Transverse colon (tissue), 4 donors: ENCODE measurements at regions of chr13 and their contacts with region 1.

Region 1: DNA sequence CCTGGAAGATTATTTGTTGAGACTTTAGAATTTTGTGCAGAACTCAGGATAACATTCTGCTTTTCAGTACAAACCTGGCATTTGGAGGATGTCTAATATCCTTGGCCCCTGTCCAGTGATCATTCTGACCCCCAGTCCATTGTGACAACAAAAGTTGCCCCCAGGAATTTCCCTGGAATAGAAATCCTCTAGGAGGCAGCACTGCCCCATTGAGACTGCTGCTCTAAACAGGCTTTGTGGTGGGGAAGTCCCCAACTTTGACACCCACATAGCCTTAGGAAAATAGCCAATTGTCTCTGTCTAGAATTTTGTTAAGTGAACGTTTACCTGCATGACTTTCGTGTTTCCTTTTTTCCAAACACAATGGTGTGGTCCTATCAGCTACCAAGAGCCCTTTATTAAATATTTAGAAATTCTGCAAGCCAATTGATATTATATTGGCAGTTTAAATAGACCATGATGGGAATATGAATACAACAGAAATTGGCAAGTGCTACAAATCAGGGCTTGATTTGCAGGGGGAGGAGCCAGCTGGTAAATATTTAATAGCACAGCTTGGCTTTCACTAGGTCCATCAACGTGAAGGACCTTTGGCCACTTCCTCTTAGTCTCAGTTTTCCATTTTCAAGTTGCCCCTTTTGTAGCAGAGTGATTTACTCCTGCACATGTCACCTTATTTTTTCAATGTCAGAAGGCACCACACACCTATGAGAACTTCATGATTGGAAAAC is 451.7 kb downstream of the EFNB2 start:
- DNase-seq: peak; percentile 43
- H3K4me3 ChIP-seq: no peak overlapping the region
- H3K27ac ChIP-seq: peak overlapping the region; percentile 3 to 61 (median 45)
- H3K4me1 ChIP-seq: peaks cover 0 to 28% (median 6%) of the 10 kb centered on the region in 4 donors
- H3K27me3 ChIP-seq: no peaks in the 10 kb centered on the region
- CTCF ChIP-seq: peak; percentile 44 to 76 (median 58)
- EP300 ChIP-seq: no peak
- POLR2A ChIP-seq: no peak

Region 2: DNA sequence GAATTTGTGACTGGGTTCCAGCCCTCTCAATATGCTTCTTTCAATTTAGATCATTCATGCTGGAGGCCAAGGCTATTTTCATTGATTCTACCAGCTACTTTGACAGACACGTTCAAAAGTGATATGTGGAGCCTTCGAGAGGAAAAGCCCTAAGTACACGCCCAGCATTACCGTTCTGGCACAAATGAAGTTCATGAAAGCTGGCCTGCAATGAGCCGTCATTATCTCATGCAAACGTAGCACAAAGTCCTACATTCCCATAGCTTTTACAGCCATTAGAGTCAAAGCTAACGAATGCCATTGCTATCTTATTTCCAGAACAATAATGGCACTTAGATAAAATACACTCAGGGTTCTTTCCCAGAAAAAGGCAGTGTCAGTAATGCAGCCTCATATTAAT is 785.9 kb before region 1 on chr13:
- in situ Hi-C with region 1: no loop called
- intact Hi-C with region 1: no loop called
- DNase-seq: no peak
- H3K4me3 ChIP-seq: no peak overlapping the region
- H3K27ac ChIP-seq: no peak overlapping the region
- H3K4me1 ChIP-seq: no peaks in the 10 kb centered on the region
- H3K27me3 ChIP-seq: no peaks in the 10 kb centered on the region
- CTCF ChIP-seq: no peak
- EP300 ChIP-seq: no peak
- POLR2A ChIP-seq: no peak

Region 3: GRCh38 chr13:105740739-105741138 is 343.0 kb before region 1 on chr13:
- in situ Hi-C with region 1: no loop called
- intact Hi-C with region 1: no loop called
- DNase-seq: no peak
- H3K4me3 ChIP-seq: no peak overlapping the region
- H3K27ac ChIP-seq: no peak overlapping the region
- H3K4me1 ChIP-seq: no peaks in the 10 kb centered on the region
- H3K27me3 ChIP-seq: no peaks in the 10 kb centered on the region
- CTCF ChIP-seq: no peak
- EP300 ChIP-seq: no peak
- POLR2A ChIP-seq: no peak

Region 4: DNA sequence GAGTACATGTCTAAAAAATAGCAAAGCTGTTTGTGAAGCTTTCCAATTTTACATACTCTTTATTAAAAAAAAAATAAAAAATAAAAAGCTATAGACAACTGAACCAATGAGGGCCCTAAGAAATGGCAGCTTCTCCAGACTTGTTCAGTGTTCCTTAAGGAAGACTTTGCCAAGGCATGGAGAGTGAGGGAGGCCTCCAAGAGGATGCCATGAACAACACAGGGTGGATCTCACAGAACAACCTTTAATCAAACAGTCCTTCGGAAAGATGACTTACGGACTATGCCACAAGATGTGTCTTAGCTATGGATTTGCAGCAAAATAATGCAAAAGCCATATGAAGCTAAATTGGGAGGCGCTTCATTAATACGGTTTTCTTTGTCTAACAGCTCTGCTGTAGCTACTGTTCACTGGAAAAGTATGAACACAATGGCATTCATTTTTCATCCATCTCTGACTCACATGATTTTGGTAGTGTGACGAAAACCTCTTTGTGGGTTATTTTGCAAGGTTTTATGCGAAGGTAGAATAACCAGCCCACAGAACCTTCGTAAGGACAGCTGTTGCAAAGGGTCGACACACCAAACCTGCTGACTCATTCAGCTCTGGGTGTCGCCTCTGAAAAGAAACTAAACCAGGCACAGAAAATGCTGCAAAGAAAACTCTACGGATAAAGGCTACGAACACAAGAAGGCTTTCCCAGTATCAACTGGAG is 423.9 kb after region 1 on chr13:
- in situ Hi-C with region 1: loop called in 2 of 4 experiments (anchors 25 kb)
- intact Hi-C with region 1: no loop called
- DNase-seq: no peak
- H3K4me3 ChIP-seq: no peak overlapping the region
- H3K27ac ChIP-seq: peak overlapping the region in 1 of 4 donors; percentile 8
- H3K4me1 ChIP-seq: peaks cover 0 to 4% (median 0%) of the 10 kb centered on the region in 4 donors
- H3K27me3 ChIP-seq: no peaks in the 10 kb centered on the region
- CTCF ChIP-seq: no peak
- EP300 ChIP-seq: no peak
- POLR2A ChIP-seq: no peak

Region 5: DNA sequence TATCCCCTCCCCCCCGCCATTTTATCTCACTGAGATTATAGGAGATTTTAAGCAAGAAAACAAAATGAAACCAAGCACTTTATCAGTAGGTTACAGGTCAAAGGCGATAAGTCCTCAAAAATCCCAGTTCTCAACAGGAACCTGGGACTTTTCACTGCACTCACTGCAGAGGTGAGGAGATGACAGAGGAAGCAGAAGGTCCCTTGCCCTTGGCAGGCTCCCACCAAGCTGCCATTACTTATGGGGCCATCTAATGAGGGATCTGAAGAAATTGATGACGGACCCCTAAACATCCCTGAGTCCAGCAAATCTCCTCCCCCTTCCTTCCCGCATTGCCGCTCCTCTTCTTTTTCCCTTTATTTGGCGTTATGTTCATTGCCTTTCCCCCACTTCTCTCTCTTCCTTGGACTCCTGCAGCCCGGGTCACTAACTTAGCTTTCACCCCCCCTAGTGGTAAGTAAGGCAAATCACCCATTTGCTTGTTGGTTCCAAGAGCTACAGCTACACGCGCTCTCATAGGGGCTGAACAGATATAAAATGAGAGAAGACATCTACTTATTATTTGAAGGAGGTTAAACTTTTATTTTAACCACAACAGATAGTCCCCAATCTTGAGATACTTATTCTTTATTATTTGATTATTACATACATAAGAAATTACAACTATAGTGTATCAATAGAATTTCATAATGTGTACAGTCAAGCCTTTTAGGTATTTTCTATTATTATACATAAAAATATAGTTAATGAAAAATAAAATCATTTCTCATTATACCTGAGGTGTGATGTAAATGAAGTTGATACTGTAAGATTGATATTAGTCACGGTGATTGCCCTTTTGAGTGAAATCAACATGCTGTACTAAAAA is 536.1 kb after region 1 on chr13:
- in situ Hi-C with region 1: no loop called
- intact Hi-C with region 1: no loop called
- DNase-seq: peak; percentile 26
- H3K4me3 ChIP-seq: no peak overlapping the region
- H3K27ac ChIP-seq: no peak overlapping the region
- H3K4me1 ChIP-seq: peaks cover 0 to 5% (median 2%) of the 10 kb centered on the region in 4 donors
- H3K27me3 ChIP-seq: no peaks in the 10 kb centered on the region
- CTCF ChIP-seq: peak; percentile 69 to 78 (median 76)
- EP300 ChIP-seq: no peak
- POLR2A ChIP-seq: no peak

Region 6: DNA sequence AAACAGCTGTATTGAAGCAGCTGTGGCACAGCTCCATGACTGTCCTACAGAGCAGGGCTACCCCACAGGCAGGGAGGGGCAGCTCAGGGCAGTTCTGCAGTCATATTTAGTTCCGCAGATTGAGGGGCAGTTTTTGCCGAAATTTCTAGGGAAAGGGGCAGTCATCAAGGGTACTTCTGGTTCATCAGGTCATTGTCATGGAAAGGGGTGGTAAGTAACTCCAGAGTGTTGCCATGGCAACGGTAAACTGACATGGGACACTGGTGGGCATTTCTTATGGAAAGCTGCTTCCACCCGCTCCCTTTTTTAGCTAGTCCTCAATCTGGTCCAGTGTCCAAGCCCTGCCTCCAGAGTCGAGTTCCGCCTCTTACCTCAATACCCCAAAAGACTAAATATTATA is 1428.8 kb after region 1 on chr13:
- in situ Hi-C with region 1: no loop called
- intact Hi-C with region 1: no loop called
- DNase-seq: no peak
- H3K4me3 ChIP-seq: no peak overlapping the region
- H3K27ac ChIP-seq: no peak overlapping the region
- H3K4me1 ChIP-seq: no peaks in the 10 kb centered on the region
- H3K27me3 ChIP-seq: no peaks in the 10 kb centered on the region
- CTCF ChIP-seq: no peak
- EP300 ChIP-seq: no peak
- POLR2A ChIP-seq: no peak